Activated CD4-positive, alpha-beta T cell treated with anti-CD3 and anti-CD28 coated beads for 36 hours (primary cell): ENCODE measurements at regions of chr10 and their contacts with region 1.

Region 1: GRCh38 chr10:13348216-13349017 is at the start of gene SEPHS1:
- DNase-seq: peak; percentile 93
- ATAC-seq: peak; percentile 77
- H3K4me3 Mint-ChIP-seq: peak within 1 kb of the TSS; percentile 87
- H3K27ac Mint-ChIP-seq: peak within 1 kb of the TSS; percentile 95
- H3K4me1 Mint-ChIP-seq: peaks cover 57% of the 10 kb centered on the region
- H3K27me3 Mint-ChIP-seq: no peaks in the 10 kb centered on the region
- total RNA-seq, gene SEPHS1: 74.5 to 74.7 TPM

Region 2: DNA sequence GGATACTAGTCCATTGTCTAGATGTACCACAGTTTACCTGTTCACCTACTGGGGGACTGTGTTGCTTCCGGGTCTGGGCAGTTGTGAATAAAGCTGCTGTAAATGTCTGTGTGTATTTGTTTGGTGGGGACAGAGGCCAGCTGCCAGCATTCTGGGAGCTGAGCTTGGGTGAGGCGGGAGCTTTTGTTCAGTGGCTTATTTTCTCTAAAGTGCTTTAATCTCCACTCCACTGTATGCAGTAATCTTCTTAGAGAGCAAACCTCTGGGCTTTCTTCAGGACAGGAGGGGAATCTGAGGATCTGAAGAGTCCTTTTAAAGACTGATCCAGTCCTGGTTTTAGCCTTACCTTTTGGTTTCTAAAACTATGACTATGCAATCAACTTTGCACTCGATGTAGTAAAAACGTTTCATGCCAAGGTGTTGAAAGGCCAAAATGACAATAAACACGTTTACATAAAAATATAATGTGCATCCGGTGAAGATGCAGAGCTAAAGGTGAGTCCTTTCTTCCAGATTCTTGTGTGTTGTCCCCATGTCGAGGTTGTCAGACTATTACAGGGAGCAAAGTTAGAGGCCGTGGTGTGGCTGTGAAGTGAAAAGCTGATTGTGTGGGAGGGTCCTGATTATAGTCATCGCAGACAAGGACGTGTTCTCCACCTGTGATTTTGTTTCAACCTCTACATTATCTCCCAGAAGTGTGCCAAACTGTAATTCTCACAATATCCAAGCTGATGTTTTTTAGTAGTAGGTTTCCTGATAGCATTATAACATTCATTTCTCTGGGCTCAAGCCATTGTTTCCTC is 719.3 kb before region 1 on chr10:
- CTCF ChIA-PET with region 1: no interaction called
- POLR2A ChIA-PET with region 1: no interaction called
- intact Hi-C with region 1: no loop called
- DNase-seq: peak; percentile 50
- ATAC-seq: peak; percentile 83
- H3K4me3 Mint-ChIP-seq: peak overlapping the region; percentile 20
- H3K27ac Mint-ChIP-seq: peak overlapping the region; percentile 72
- H3K4me1 Mint-ChIP-seq: peaks cover 29% of the 10 kb centered on the region
- H3K27me3 Mint-ChIP-seq: no peaks in the 10 kb centered on the region

Region 3: GRCh38 chr10:13586676-13587355 is 238.4 kb after region 1 on chr10 and contains the start of gene PRPF18:
- CTCF ChIA-PET with region 1: interaction called, 3 read pairs
- POLR2A ChIA-PET with region 1: no interaction called
- intact Hi-C with region 1: loop called in 1 of 2 experiments (anchors 1 kb)
- DNase-seq: peak; percentile 97
- ATAC-seq: peak; percentile 100
- H3K4me3 Mint-ChIP-seq: peak within 1 kb of the TSS; percentile 99
- H3K27ac Mint-ChIP-seq: peak within 1 kb of the TSS; percentile 95
- H3K4me1 Mint-ChIP-seq: peaks cover 29% of the 10 kb centered on the region
- H3K27me3 Mint-ChIP-seq: peaks cover 8% of the 10 kb centered on the region
- total RNA-seq, gene PRPF18: 21.0 to 22.1 TPM